ENCODE measurements at regions of chrX and their contacts with region 1.

Region 1: DNA sequence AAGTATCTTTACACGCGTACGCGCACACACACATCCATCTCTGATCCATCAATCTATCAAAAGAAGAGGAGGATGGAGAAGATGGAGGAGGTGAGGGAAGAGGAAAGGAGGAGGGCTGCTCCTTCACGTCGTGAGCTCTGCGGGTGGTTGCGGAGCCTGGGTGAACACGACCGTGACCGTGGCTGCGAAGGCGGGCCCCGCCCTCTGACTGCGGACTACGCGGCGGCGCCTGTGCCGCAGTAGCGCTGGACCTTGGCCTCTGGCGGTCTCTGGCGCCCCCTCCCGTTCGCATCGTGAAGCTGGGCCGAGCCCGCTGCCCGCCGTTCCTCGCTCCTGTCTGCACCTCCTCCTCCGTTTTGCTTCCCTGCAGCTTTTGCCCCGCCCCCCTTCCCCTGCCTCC is 37.7 kb upstream of the ARAF start:
- DNase-seq: peak; percentile 77 to 87
- ATAC-seq: peak; percentile 97 to 99 (median 98)
- H3K4me3 ChIP-seq: peak overlapping the region; percentile 29 to 66 (median 59)
- H3K27ac ChIP-seq: no peak overlapping the region
- H3K4me1 ChIP-seq: peaks cover 0 to 4% (median 0%) of the 10 kb centered on the region in 9 donors
- H3K27me3 ChIP-seq: peaks cover 0 to 10% (median 0%) of the 10 kb centered on the region in 7 donors
- CTCF ChIP-seq: peak; percentile 66 to 87 (median 82)

Region 2: DNA sequence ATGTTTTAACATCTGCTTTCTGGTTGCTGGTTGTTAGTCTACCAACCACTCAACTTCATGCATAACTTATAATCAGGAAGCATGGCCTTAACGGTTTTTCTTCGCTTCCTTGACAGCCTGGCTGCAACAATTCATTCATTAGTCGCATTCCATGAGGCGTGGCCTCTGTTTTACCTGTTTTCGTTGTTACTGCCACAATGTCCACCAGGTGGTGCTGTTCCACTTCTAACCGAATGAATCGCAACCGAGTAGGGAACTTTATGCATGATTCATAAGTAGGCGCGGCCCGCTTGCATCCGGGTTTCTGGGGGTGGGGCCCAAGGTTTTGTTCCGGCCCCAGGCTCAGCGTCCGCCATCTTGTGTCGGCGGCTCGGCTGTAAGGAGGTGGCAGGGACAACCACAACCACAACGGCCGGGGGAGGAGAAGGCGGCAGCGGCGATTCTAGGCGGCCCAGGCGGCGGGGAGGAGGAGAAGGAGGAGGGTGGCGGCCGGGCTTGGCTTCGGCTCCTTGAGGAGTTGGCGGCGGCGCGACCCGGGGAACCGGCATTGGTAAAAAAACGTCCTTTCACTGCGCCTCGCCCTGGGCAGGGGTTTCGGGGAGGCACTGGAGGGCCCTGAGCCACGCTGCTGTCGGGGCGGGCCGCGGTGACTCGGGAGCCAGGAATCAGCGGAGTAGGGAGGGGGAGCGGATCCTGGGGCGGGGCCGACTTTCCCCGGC is 329.7 kb before region 1 on chrX and contains the start of gene UBA1:
- intact Hi-C with region 1: loop called in 7 of 10 experiments (anchors 1 to 5 kb)
- DNase-seq: peak; percentile 87 to 93
- ATAC-seq: peak; percentile 90 to 95 (median 94)
- H3K4me3 ChIP-seq: peak within 1 kb of the TSS; percentile 63 to 99 (median 82)
- H3K27ac ChIP-seq: peak within 1 kb of the TSS; percentile 84 to 98 (median 96)
- H3K4me1 ChIP-seq: peaks cover 2 to 70% (median 43%) of the 10 kb centered on the region in 9 donors
- H3K27me3 ChIP-seq: peaks cover 0 to 28% (median 0%) of the 10 kb centered on the region in 7 donors
- CTCF ChIP-seq: peak; percentile 48 to 90 (median 74)
- total RNA-seq, gene UBA1: 110 to 157 (median 128) TPM

Region 3: GRCh38 chrX:47373198-47373597 is 150.1 kb before region 1 on chrX:
- intact Hi-C with region 1: loop called in 1 of 10 experiments (anchors 10 kb)
- DNase-seq: no peak
- ATAC-seq: no peak
- H3K4me3 ChIP-seq: no peak overlapping the region
- H3K27ac ChIP-seq: no peak overlapping the region
- H3K4me1 ChIP-seq: no peaks in the 10 kb centered on the region
- H3K27me3 ChIP-seq: peaks cover 0 to 3% (median 0%) of the 10 kb centered on the region in 7 donors
- CTCF ChIP-seq: no peak

Region 4: DNA sequence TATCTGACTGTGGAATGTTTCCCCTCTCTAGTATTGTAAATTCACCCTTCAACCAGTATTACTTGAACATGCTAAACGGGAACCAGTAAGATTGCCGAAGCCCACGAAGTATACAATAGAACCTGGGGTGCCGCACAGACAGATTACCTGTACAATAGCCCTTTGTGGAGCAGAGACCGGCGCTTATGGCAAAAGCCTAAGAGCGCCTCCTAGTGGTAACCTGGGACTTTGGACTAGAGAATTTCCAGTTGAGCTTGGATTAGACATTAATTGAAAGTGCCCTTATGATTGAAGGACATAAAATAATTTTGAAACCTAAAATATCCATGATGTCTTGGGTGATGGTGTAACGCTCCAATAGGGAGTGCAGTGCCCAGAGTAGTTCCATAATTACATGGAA is 138.8 kb before region 1 on chrX:
- intact Hi-C with region 1: loop called in 6 of 10 experiments (anchors 10 kb)
- DNase-seq: peak; percentile 10 to 46
- ATAC-seq: peak in 6 of 8 donors; percentile 29 to 67 (median 52)
- H3K4me3 ChIP-seq: no peak overlapping the region
- H3K27ac ChIP-seq: no peak overlapping the region
- H3K4me1 ChIP-seq: peaks cover 0 to 9% (median 0%) of the 10 kb centered on the region in 9 donors
- H3K27me3 ChIP-seq: peaks cover 0 to 22% (median 0%) of the 10 kb centered on the region in 7 donors
- CTCF ChIP-seq: peak; percentile 43 to 79 (median 72)

Region 5: GRCh38 chrX:47390780-47391179 is 132.5 kb before region 1 on chrX:
- intact Hi-C with region 1: loop called in 6 of 10 experiments (anchors 5 to 10 kb)
- DNase-seq: no peak
- ATAC-seq: no peak
- H3K4me3 ChIP-seq: no peak overlapping the region
- H3K27ac ChIP-seq: no peak overlapping the region
- H3K4me1 ChIP-seq: no peaks in the 10 kb centered on the region
- H3K27me3 ChIP-seq: peaks cover 0 to 7% (median 0%) of the 10 kb centered on the region in 7 donors
- CTCF ChIP-seq: no peak